ENCODE measurements at regions of chr10 and their contacts with region 1.

Region 1: GRCh38 chr10:70132098-70133029 is at the start of gene AIFM2:
- DNase-seq: peak; percentile 94 to 97
- H3K4me3 ChIP-seq: peak within 1 kb of the TSS; percentile 72
- H3K4me3 Mint-ChIP-seq: peak within 1 kb of the TSS; percentile 81
- H3K27ac Mint-ChIP-seq: peak within 1 kb of the TSS; percentile 78
- H3K4me1 ChIP-seq: peaks cover 21% of the 10 kb centered on the region
- H3K4me1 Mint-ChIP-seq: peaks cover 16% of the 10 kb centered on the region
- H3K27me3 ChIP-seq: no peaks in the 10 kb centered on the region
- H3K27me3 Mint-ChIP-seq: no peaks in the 10 kb centered on the region
- CTCF ChIP-seq: peak in 1 of 2 experiments; percentile 21
- total RNA-seq, gene AIFM2: 29.2 and 31.1 TPM in 2 replicates

Region 2: DNA sequence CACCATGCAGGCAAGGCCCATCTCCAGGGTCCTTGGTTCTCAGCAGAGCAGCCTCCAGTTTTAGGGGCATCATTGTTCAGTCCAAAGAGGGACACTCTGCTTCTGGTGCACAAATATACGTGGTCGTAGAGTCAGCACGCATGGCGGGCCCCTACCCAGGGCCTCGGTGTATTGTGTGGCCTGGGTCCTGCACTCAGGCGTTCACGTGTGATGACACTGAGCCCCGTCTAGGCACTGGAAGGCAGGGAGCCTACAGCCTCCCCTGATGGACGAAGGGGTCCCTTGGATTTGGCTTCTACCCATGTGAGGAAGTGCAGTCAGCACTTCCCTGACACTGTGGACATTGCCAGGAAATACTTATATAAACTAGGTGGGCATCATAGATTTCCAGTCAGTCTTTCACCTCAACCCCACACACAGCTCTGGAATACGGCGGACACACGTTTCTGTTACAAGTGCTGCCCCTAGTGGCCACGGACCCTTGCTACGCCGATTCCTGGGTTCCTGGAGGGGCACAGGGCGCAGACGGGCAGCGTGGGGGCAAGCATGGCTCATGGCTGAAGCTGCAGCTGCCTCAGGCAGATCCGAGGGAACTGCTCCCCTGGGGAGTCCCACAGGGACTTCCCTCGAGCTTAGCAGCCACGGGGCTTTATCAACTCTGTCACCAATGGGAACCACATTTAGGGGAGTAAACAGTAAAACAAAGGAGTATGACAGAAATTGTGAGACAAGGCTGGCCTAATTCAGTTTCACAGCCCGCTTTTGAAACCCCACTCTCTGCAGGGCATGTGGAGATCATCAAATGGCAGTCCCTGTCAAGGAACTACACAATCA is 25.2 kb before region 1 on chr10:
- CTCF ChIA-PET with region 1: no interaction called
- POLR2A ChIA-PET with region 1: no interaction called
- intact Hi-C with region 1: loop called (anchors 1 kb)
- DNase-seq: peak in 1 of 2 experiments; percentile 63
- H3K4me3 ChIP-seq: no peak overlapping the region
- H3K4me3 Mint-ChIP-seq: no peak overlapping the region
- H3K27ac Mint-ChIP-seq: no peak overlapping the region
- H3K4me1 ChIP-seq: peaks cover 11% of the 10 kb centered on the region
- H3K4me1 Mint-ChIP-seq: no peaks in the 10 kb centered on the region
- H3K27me3 ChIP-seq: no peaks in the 10 kb centered on the region
- H3K27me3 Mint-ChIP-seq: no peaks in the 10 kb centered on the region
- CTCF ChIP-seq: peak; percentile 64 to 76

Region 3: DNA sequence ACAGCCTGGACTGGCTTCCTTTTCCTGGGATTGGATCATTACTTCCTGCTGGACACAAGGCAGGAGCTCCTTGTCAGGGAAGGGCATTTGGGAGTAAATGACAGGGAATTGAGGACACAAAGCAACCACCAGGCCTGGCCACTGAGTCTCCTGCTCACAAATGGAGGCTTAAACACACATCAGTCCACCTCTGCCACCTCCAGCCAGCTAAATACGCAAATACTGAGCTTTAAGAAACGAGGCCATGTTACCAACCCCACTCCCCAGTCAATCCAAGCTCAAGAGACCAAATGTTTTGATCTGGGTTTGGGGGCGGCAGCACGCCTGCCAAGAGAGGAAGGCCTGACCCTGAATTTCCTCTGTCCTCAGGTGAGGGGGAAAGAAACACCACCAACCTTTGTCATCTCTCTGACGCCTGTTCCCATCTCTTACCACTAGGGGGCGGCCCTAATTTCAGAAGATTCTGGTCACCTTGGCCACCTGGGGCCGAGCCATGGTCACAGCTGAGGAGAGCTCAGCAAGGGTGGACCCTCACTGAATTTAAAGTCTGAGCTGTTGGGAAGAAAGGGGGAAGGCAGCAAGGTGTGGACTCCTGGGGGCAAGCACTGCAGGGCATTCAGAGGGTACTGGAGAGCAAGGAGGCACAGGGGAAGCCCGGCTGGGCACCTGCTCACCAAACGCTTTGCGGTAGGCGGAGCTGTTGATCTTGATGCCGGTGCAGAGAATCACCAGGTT is 16.2 kb before region 1 on chr10:
- CTCF ChIA-PET with region 1: interaction called, 13 read pairs
- POLR2A ChIA-PET with region 1: interaction called, 5 read pairs
- intact Hi-C with region 1: loop called (anchors 1 kb)
- DNase-seq: peak; percentile 76 to 87
- H3K4me3 ChIP-seq: no peak overlapping the region
- H3K4me3 Mint-ChIP-seq: no peak overlapping the region
- H3K27ac Mint-ChIP-seq: peak overlapping the region; percentile 7
- H3K4me1 ChIP-seq: no peaks in the 10 kb centered on the region
- H3K4me1 Mint-ChIP-seq: no peaks in the 10 kb centered on the region
- H3K27me3 ChIP-seq: no peaks in the 10 kb centered on the region
- H3K27me3 Mint-ChIP-seq: no peaks in the 10 kb centered on the region
- CTCF ChIP-seq: peak; percentile 97 to 99

Region 4: DNA sequence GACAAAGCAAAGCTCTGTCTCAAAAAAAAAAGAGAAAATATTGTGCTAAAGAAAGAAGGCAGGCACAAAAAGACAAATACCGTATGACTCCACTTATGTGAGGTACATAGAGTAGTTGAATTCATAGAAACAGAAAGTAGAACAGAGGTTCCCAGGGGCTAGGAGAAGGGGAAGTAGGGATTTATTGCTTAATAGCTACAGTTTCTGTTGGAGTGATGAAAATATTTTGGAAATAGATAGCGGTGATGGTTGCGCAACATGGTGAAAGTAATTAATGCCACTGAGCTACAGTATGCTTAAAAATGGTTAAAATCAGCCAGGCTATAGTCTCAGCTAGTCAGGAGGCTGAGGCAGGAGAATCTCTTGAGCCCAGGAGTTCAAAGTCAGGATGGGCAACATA is 169.9 kb after region 1 on chr10:
- CTCF ChIA-PET with region 1: no interaction called
- POLR2A ChIA-PET with region 1: no interaction called
- intact Hi-C with region 1: no loop called
- DNase-seq: no peak
- H3K4me3 ChIP-seq: no peak overlapping the region
- H3K4me3 Mint-ChIP-seq: no peak overlapping the region
- H3K27ac Mint-ChIP-seq: no peak overlapping the region
- H3K4me1 ChIP-seq: no peaks in the 10 kb centered on the region
- H3K4me1 Mint-ChIP-seq: no peaks in the 10 kb centered on the region
- H3K27me3 ChIP-seq: no peaks in the 10 kb centered on the region
- H3K27me3 Mint-ChIP-seq: no peaks in the 10 kb centered on the region
- CTCF ChIP-seq: no peak